Activated naive CD4-positive, alpha-beta T cell treated with anti-CD3 and anti-CD28 coated beads for 36 hours (primary cell): ENCODE measurements at regions of chr11 and their contacts with region 1.

Region 1: GRCh38 chr11:76207642-76208401 is 1.5 kb upstream of the WNT11 start:
- DNase-seq: peak; percentile 77
- H3K4me3 Mint-ChIP-seq: peak overlapping the region; percentile 68
- H3K27ac Mint-ChIP-seq: no peak overlapping the region
- H3K4me1 Mint-ChIP-seq: peaks cover 12% of the 10 kb centered on the region
- H3K27me3 Mint-ChIP-seq: peaks cover 61% of the 10 kb centered on the region

Region 2: DNA sequence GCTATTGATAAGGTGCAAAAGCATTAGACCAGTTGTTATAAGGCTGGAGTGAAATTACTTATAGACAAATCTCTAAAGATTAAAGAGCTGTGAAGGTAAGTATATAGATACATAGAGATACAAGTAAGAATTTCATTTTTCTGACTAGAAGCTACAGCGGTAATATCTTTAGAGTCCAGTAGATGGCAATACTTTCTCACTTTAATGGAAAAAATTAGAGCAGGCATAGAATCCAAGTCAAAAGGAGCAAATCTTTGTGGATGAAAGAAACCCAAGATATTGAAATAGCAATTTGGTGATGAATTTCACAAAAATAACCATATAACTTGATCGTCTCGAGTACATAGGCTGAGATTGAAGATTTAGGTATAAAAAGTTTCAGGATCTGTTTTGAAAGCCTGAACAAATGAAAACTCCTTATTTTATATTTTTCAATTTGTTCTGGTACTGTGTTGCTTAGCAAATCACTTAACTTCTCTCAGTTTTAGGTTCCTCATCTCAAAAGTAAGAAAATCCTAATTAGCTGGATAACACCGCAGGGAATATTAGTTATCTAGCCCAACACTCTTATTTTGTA is 310.9 kb before region 1 on chr11:
- CTCF ChIA-PET with region 1: interaction called, 6 read pairs
- intact Hi-C with region 1: loop called (anchors 1 kb)
- DNase-seq: no peak
- H3K4me3 Mint-ChIP-seq: no peak overlapping the region
- H3K27ac Mint-ChIP-seq: no peak overlapping the region
- H3K4me1 Mint-ChIP-seq: peaks cover 23% of the 10 kb centered on the region
- H3K27me3 Mint-ChIP-seq: no peaks in the 10 kb centered on the region

Region 3: DNA sequence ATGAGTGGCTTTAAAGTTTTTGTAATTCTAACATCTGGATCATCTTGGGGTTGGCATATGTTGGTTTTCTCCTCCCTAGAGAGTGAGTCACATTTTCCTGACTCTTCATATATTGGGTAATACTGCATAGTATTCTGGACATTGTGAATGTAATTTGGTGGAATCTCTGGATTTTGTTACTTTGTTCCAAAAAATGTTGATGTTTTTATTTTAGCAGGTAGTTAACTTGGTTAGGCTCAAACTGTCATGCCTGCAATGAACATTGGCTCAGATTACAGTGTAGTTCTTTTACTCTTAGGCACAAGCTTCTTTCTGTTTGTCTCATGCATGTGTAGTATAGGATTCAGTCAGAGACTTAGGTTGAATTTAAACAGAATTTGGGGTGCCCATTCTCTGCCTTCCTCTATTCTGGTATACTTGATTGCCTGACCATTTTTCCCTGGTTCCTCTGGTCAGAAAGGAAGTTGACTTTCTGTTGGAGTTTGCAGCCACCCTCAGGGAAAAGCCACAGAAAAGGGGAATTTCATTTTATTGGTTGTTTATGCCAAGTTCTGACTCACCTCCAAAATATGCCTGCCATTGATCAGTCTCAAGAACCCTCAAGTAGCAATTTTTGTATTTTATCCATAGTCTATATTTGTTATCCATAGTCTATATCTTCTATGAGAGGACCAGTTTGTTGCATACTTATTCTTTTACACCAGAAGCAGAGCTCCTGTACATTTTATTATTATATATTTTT is 241.1 kb before region 1 on chr11:
- CTCF ChIA-PET with region 1: no interaction called
- intact Hi-C with region 1: no loop called
- DNase-seq: no peak
- H3K4me3 Mint-ChIP-seq: no peak overlapping the region
- H3K27ac Mint-ChIP-seq: no peak overlapping the region
- H3K4me1 Mint-ChIP-seq: peaks cover 6% of the 10 kb centered on the region
- H3K27me3 Mint-ChIP-seq: no peaks in the 10 kb centered on the region

Region 4: GRCh38 chr11:76235233-76236091 is 27.6 kb after region 1 on chr11:
- CTCF ChIA-PET with region 1: interaction called, 56 read pairs
- intact Hi-C with region 1: loop called (anchors 1 kb)
- DNase-seq: peak; percentile 96
- H3K4me3 Mint-ChIP-seq: peak overlapping the region; percentile 84
- H3K27ac Mint-ChIP-seq: peak overlapping the region; percentile 93
- H3K4me1 Mint-ChIP-seq: peaks cover 44% of the 10 kb centered on the region
- H3K27me3 Mint-ChIP-seq: peaks cover 3% of the 10 kb centered on the region

Region 5: GRCh38 chr11:76318744-76319384 is 111.0 kb after region 1 on chr11:
- CTCF ChIA-PET with region 1: interaction called, 73 read pairs
- intact Hi-C with region 1: loop called (anchors 1 kb)
- DNase-seq: peak; percentile 89
- H3K4me3 Mint-ChIP-seq: no peak overlapping the region
- H3K27ac Mint-ChIP-seq: no peak overlapping the region
- H3K4me1 Mint-ChIP-seq: peaks cover 2% of the 10 kb centered on the region
- H3K27me3 Mint-ChIP-seq: peaks cover 28% of the 10 kb centered on the region

Region 6: DNA sequence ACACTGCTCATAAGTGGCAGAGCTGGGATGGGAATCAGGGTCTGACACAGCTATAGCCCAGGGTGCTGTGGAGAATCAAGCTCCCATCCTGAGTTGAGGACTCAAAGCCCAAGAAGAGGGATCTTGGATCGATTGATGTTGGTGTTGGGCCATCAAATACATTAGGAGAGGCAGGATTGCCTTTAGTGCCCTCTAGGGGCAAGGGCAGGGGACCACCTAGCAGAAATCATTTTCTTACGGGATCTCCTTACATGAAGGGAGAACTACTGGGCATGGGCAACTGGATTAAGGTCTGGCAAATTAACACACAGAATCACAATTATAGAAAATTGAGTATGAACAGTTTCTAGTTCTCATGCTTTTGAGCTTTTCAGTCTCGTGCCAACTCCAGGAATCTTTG is 212.1 kb after region 1 on chr11:
- CTCF ChIA-PET with region 1: interaction called, 6 read pairs
- intact Hi-C with region 1: loop called (anchors 5 kb)
- DNase-seq: peak; percentile 32
- H3K4me3 Mint-ChIP-seq: no peak overlapping the region
- H3K27ac Mint-ChIP-seq: no peak overlapping the region
- H3K4me1 Mint-ChIP-seq: peaks cover 7% of the 10 kb centered on the region
- H3K27me3 Mint-ChIP-seq: peaks cover 5% of the 10 kb centered on the region

Region 7: DNA sequence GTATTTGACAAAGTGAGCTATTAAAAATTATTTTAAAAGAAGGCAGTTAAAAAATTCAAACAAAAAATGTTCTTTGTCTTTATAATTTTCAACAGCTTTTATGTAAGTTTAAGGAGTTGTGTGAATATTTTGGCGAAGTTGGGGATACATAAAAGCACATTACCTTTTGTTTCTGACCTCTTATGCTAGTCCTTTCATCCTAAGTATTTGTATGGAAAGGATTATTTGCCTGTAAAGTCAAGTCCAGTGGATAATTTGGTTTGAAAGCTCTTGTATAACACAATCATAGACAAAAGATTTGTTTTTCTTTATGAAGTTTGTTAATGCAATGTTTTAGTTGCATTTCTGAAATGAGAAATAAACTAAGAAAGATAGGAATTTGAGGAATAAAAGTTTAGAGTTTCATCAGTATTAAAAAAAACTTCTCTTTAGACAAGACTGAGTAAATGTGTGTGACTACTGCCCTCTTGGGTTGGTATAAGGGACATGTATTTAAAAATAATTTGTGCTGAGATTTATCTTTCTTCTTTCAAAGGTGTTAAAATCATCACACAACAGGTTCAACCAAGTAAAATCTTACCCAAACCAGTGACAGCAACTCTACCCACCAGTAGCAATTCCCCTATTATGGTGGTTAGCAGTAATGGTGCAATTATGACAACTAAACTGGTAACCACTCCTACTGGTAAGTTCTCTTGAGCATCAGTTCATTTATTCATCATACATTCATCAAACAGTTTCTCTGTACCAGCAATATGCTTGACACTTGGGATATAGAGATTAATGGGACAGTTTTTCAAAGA is 305.2 kb after region 1 on chr11:
- CTCF ChIA-PET with region 1: interaction called, 12 read pairs
- intact Hi-C with region 1: loop called (anchors 5 kb)
- DNase-seq: no peak
- H3K4me3 Mint-ChIP-seq: no peak overlapping the region
- H3K27ac Mint-ChIP-seq: no peak overlapping the region
- H3K4me1 Mint-ChIP-seq: no peaks in the 10 kb centered on the region
- H3K27me3 Mint-ChIP-seq: no peaks in the 10 kb centered on the region